ENCODE measurements at regions of chr17 and their contacts with region 1.

Region 1: GRCh38 chr17:44324571-44325275 is at the start of gene SLC25A39:
- DNase-seq: peak; percentile 93 to 97 (median 94)
- H3K4me3 ChIP-seq: peak within 1 kb of the TSS; percentile 70 to 88 (median 79)
- H3K27ac ChIP-seq: peak within 1 kb of the TSS; percentile 55 to 98 (median 91)
- H3K4me1 ChIP-seq: peaks cover 17 to 29% of the 10 kb centered on the region in 2 donors
- H3K27me3 ChIP-seq: no peaks in the 10 kb centered on the region
- CTCF ChIP-seq: no peak
- POLR2A ChIP-seq: peak; percentile 59 to 81
- total RNA-seq, gene SLC25A39: 112 to 192 (median 157) TPM

Region 2: GRCh38 chr17:44218344-44219107 is 106.2 kb before region 1 on chr17:
- intact Hi-C with region 1: loop called (anchors 2 kb)
- DNase-seq: peak; percentile 85 to 91 (median 89)
- H3K4me3 ChIP-seq: peak overlapping the region in 2 of 4 donors; percentile 58 to 81
- H3K27ac ChIP-seq: peak overlapping the region in 4 of 5 donors; percentile 98 to 100 (median 99)
- H3K4me1 ChIP-seq: peaks cover 20 to 32% of the 10 kb centered on the region in 2 donors
- H3K27me3 ChIP-seq: no peaks in the 10 kb centered on the region
- CTCF ChIP-seq: peak; percentile 20 to 58 (median 44)
- POLR2A ChIP-seq: peak in 1 of 2 donors; percentile 62

Region 3: GRCh38 chr17:45190503-45191255 is 866.0 kb after region 1 on chr17:
- intact Hi-C with region 1: no loop called
- DNase-seq: no peak
- H3K4me3 ChIP-seq: no peak overlapping the region
- H3K27ac ChIP-seq: no peak overlapping the region
- H3K4me1 ChIP-seq: no peaks in the 10 kb centered on the region
- H3K27me3 ChIP-seq: no peaks in the 10 kb centered on the region
- CTCF ChIP-seq: no peak
- POLR2A ChIP-seq: no peak